Activated B cell treated with CpG ODN at 0.5 μM for 24 hours (primary cell): ENCODE measurements at regions of chr11 and their contacts with region 1.

Region 1: DNA sequence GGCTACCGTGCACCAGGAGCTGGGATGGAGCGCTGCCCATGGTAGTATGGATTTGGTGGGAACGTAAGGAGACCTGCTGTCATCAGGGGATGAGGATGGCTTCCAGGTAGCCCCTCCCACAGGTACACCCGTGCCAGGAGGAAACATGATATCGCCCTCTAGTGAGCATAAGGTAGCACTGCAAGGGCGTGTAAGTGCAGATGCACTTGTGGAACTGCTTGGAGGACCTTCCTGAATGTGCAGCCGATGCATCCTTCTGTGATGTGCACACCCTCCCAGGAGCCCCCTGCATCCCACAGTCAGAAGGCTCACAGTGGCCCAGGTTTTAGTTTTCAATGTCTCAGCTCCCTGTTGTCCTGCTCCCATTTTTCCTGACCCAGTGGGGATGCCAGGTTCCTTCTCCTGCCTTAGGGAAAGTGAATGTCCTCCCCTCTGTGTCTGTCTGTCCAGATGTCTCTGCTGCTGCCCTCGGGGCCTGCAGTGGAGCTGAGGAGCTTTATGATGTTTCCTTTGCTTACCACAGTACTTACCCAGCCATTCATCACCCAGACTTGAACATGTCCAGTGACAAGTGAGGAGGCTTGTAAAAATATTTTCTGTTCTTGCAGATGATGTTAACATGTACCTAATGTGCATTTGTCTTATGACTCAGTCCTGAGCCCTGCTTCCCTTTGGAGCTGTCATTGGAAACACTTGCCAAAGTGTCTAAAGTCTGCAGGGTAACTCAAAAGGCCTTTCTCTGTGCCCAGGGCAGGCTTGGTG is 49.2 kb downstream of the DBX1 start:
- DNase-seq: no peak
- ATAC-seq: peak; percentile 91
- H3K4me3 Mint-ChIP-seq: no peak overlapping the region
- H3K27ac Mint-ChIP-seq: no peak overlapping the region
- H3K4me1 Mint-ChIP-seq: peaks cover 3% of the 10 kb centered on the region
- H3K27me3 Mint-ChIP-seq: peaks cover 11% of the 10 kb centered on the region
- CTCF ChIP-seq: peak; percentile 21

Region 2: GRCh38 chr11:19938169-19938856 is 172.8 kb before region 1 on chr11:
- CTCF ChIA-PET with region 1: interaction called, 3 read pairs
- POLR2A ChIA-PET with region 1: no interaction called
- intact Hi-C with region 1: loop called (anchors 1 kb)
- DNase-seq: no peak
- ATAC-seq: peak; percentile 56
- H3K4me3 Mint-ChIP-seq: no peak overlapping the region
- H3K27ac Mint-ChIP-seq: no peak overlapping the region
- H3K4me1 Mint-ChIP-seq: peaks cover 8% of the 10 kb centered on the region
- H3K27me3 Mint-ChIP-seq: peaks cover 9% of the 10 kb centered on the region
- CTCF ChIP-seq: no peak

Region 3: DNA sequence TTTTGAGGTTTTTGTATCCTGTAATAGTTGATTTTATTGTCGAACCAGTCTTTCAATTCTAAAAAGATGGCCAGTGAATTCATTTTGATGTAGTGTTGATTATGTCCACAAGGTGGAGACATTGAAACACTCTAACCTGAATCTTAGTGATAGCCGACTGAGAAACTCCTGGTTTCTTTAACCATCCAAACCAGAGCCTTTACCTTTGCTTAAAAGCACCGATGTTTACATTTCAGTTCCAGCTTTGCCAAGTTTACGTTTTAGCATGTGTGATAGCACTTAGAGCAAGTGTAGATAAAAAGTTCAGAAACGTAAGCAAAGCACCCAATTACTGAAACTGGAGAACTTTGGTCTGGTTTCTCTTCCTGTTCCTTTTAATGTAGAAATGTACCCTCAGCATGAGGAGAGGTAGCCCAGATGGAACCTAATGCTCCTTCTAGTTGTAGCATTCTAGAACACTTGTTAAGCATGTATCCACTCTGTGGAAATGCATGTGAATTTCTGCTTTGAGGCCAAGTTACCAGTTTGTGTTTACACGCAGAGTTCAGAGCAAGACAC is 159.5 kb before region 1 on chr11:
- CTCF ChIA-PET with region 1: interaction called, 24 read pairs
- POLR2A ChIA-PET with region 1: interaction called, 3 read pairs
- intact Hi-C with region 1: loop called (anchors 1 kb)
- DNase-seq: no peak
- ATAC-seq: peak; percentile 68
- H3K4me3 Mint-ChIP-seq: peak overlapping the region; percentile 74
- H3K27ac Mint-ChIP-seq: no peak overlapping the region
- H3K4me1 Mint-ChIP-seq: peaks cover 10% of the 10 kb centered on the region
- H3K27me3 Mint-ChIP-seq: peaks cover 15% of the 10 kb centered on the region
- CTCF ChIP-seq: no peak

Region 4: DNA sequence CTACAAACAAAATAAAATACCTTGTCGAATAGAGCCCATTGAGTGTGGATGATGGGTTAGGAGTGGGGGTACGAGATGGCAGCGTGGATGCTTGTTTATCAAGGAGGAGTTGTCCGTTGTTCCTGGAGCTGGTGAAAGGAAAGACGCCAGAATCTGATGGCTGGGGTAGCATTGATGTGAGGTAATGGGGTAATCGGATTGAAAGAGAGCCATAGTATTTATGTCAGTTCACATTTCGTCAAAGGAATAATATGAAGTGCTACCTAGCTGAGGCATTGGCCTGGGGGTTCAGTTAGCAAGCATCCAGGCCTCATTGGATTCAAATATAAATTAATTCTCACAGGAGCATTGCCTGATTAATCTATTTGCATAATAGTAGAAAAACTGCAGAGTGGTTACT is 66.0 kb after region 1 on chr11:
- CTCF ChIA-PET with region 1: no interaction called
- POLR2A ChIA-PET with region 1: no interaction called
- intact Hi-C with region 1: no loop called
- DNase-seq: no peak
- ATAC-seq: no peak
- H3K4me3 Mint-ChIP-seq: no peak overlapping the region
- H3K27ac Mint-ChIP-seq: no peak overlapping the region
- H3K4me1 Mint-ChIP-seq: no peaks in the 10 kb centered on the region
- H3K27me3 Mint-ChIP-seq: peaks cover 31% of the 10 kb centered on the region
- CTCF ChIP-seq: no peak